Activated CD8-positive, alpha-beta T cell treated with anti-CD3 and anti-CD28 coated beads for 36 hours (primary cell): ENCODE measurements at regions of chr12 and their contacts with region 1.

Region 1: DNA sequence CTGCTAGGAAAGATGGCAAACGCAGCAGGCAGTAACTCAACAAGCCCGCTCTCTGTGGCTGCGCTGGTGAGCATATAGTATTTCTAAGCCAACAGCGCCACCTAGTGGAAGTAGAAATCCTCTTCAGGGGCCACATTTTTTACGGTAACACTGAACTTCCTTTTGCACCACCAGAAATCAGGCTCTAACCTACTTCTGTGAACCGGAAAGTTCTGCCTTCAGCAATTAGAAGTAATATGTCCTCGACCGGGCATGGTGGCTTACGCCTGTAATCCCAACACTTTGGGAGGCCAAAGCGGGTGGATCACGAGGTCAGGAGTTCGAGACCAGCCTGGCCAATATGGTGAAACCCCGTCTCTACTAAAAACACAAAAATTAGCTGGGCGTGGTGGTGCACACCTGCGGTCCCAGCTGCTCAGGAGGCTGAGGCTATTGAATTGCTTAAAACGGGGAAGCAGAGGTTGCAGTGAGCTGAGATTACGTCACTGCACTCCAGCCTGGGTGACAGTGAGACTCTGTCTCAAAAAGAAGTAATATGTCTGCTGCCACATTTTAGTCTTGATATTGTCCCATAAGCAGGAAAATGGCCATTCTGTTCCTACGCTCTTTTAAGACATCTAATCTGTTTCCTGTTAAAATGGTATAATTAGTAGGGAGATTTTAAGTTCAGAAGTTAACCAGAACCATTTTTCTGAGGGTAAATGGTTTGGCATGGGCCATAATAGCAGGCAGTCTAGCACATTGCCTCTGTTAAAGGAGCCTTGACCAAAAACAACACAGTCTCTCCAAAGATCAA is 26.8 kb downstream of the APOBEC1 start:
- DNase-seq: peak; percentile 86
- ATAC-seq: peak; percentile 79
- H3K4me3 Mint-ChIP-seq: peak overlapping the region; percentile 68
- H3K27ac Mint-ChIP-seq: peak overlapping the region; percentile 80
- H3K4me1 Mint-ChIP-seq: peaks cover 29% of the 10 kb centered on the region
- H3K27me3 Mint-ChIP-seq: peaks cover 5% of the 10 kb centered on the region
- CTCF ChIP-seq: peak; percentile 93

Region 2: DNA sequence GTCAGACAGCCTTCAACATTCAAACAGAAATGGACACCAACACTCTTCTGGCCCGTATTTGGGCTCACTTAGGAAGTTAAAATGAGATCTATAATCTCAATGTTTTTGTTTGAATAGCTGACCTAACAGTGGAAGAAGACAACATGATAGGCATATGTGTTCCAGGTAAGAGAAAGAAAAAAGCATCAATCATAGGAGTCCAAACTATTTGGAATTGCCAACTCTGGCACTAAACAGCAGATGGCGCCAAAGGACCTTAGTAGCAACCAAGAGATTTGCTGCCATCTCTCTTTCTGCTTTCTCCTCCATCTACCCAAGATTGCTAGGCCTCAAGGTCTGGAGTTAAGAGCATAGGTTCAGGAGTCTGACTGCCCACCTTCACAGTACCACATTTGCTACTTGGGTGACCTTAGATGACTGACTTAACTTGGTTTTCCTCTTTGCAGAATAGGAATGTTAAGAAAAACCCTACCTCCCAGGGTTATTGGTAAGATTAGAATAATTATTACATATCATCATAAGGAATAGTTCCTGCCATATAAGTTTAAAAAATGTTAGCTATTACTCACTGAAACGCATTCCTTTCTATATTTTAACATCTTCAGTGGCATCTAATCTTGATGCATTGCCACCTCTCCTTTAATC is 419.2 kb before region 1 on chr12:
- CTCF ChIA-PET with region 1: interaction called, 15 read pairs
- POLR2A ChIA-PET with region 1: no interaction called
- intact Hi-C with region 1: loop called (anchors 2 kb)
- DNase-seq: peak; percentile 85
- ATAC-seq: peak; percentile 55
- H3K4me3 Mint-ChIP-seq: no peak overlapping the region
- H3K27ac Mint-ChIP-seq: no peak overlapping the region
- H3K4me1 Mint-ChIP-seq: no peaks in the 10 kb centered on the region
- H3K27me3 Mint-ChIP-seq: no peaks in the 10 kb centered on the region
- CTCF ChIP-seq: peak; percentile 87

Region 3: GRCh38 chr12:7571257-7571656 is 67.7 kb before region 1 on chr12:
- CTCF ChIA-PET with region 1: no interaction called
- POLR2A ChIA-PET with region 1: no interaction called
- intact Hi-C with region 1: no loop called
- DNase-seq: no peak
- ATAC-seq: no peak
- H3K4me3 Mint-ChIP-seq: no peak overlapping the region
- H3K27ac Mint-ChIP-seq: no peak overlapping the region
- H3K4me1 Mint-ChIP-seq: no peaks in the 10 kb centered on the region
- H3K27me3 Mint-ChIP-seq: peaks cover 21% of the 10 kb centered on the region
- CTCF ChIP-seq: no peak

Region 4: DNA sequence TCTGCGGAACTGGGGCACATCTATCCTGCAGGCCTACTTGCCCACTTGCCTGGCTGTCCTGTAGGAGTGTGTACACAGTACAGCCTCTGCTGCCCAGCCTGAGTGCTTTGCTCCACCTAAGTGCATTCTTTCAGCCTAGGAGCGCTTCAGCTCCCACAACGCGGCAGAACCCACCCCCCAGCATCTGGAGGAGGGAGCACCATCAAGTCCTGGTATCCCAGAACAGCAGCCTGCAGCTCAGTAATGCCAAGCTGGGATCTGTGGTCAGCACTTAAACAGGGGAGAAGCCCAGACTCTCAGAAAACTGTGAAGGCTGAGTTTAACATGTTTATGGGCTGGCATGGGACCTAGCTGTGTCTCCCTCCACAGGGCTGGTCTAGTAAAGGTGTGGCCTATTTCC is 55.4 kb before region 1 on chr12:
- CTCF ChIA-PET with region 1: interaction called, 12 read pairs
- POLR2A ChIA-PET with region 1: interaction called, 3 read pairs
- intact Hi-C with region 1: loop called (anchors 2 kb)
- DNase-seq: no peak
- ATAC-seq: no peak
- H3K4me3 Mint-ChIP-seq: no peak overlapping the region
- H3K27ac Mint-ChIP-seq: no peak overlapping the region
- H3K4me1 Mint-ChIP-seq: peaks cover 7% of the 10 kb centered on the region
- H3K27me3 Mint-ChIP-seq: peaks cover 24% of the 10 kb centered on the region
- CTCF ChIP-seq: no peak

Region 5: DNA sequence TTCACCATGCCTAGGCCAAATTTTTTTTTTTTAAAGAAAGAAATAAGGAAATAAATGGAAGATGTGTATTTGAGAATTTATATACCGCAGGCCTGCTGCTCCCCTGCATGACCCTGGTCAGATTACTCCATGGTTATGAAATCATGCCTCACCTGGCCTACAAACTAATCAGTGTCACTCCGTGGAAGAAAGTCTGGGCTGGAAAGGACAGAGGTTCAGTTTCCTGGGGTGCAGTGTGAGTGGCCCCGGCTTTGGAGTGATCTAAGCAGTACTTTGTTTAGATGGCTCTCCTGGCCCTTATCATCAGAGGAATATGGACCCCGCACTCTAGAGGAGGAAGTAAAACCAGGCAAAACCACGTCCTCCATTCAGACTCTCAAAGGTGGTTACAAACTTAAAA is 17.2 kb after region 1 on chr12:
- CTCF ChIA-PET with region 1: interaction called, 10 read pairs
- POLR2A ChIA-PET with region 1: no interaction called
- intact Hi-C with region 1: no loop called
- DNase-seq: no peak
- ATAC-seq: no peak
- H3K4me3 Mint-ChIP-seq: no peak overlapping the region
- H3K27ac Mint-ChIP-seq: no peak overlapping the region
- H3K4me1 Mint-ChIP-seq: no peaks in the 10 kb centered on the region
- H3K27me3 Mint-ChIP-seq: no peaks in the 10 kb centered on the region
- CTCF ChIP-seq: no peak

Region 6: DNA sequence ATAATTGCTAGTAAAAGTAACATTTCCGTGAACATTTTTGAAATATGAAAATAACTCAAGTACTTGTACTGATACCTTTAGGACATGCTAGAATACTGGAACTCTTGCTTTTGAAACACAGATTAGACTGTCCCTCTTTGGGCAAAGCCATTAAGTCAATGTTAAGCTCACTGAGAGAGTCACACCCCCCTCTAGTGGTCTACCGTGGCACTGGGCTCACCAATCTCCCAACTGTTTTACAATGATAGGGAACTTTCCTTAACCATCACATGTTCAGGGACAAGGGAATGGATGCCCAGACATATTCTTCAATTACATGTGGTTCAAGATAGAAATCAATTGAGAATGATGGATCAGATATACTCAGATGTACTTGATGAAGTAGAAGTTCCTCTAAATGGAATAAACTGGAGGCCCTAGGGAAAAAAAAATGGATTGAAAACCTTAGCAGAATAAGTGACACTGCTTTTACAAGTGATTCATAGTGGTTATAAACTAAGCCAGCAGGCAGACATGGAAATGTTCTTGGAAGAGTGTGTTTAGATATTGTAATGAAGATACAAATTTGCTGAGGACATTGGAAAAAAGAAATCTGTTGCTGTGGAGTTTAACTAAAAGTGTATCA is 168.0 kb after region 1 on chr12:
- CTCF ChIA-PET with region 1: interaction called, 52 read pairs
- POLR2A ChIA-PET with region 1: interaction called, 3 read pairs
- intact Hi-C with region 1: no loop called
- DNase-seq: peak; percentile 82
- ATAC-seq: peak; percentile 61
- H3K4me3 Mint-ChIP-seq: no peak overlapping the region
- H3K27ac Mint-ChIP-seq: no peak overlapping the region
- H3K4me1 Mint-ChIP-seq: no peaks in the 10 kb centered on the region
- H3K27me3 Mint-ChIP-seq: peaks cover 2% of the 10 kb centered on the region
- CTCF ChIP-seq: peak; percentile 90